Activated CD8-positive, alpha-beta T cell treated with anti-CD3 and anti-CD28 coated beads, Interleukin-2, amount 10 ng/mL, durations not matched to agents 7 days and 5 days (primary cell): ENCODE measurements at regions of chr4 and their contacts with region 1.

Region 1: GRCh38 chr4:1746265-1746691 is 25.0 kb downstream of the TACC3 start:
- DNase-seq: peak; percentile 88
- ATAC-seq: peak; percentile 78
- H3K4me3 Mint-ChIP-seq: no peak overlapping the region
- H3K27ac Mint-ChIP-seq: no peak overlapping the region
- H3K4me1 Mint-ChIP-seq: peaks cover 2% of the 10 kb centered on the region
- H3K27me3 Mint-ChIP-seq: no peaks in the 10 kb centered on the region

Region 2: DNA sequence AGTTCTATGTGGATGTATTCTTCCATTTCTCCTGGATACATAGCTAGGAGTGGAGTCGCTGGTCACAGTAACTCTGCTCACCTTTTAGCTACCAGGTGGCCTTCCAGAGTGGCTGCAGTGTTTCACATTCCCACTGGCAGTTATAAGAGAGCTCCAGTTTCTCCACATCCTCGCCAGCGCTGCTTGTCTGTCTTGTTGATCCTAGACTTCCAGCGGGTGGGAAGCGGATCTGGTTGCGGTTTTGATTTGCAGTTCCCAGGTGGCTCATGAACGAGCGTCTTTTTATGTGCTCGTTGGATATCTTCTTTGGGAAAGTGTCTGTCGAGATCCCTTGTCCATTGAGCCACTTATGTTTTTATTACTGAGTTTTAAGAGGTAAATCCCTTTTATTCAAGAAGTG is 13.4 kb before region 1 on chr4:
- CTCF ChIA-PET with region 1: interaction called, 10 read pairs
- POLR2A ChIA-PET with region 1: no interaction called
- DNase-seq: no peak
- ATAC-seq: no peak
- H3K4me3 Mint-ChIP-seq: no peak overlapping the region
- H3K27ac Mint-ChIP-seq: no peak overlapping the region
- H3K4me1 Mint-ChIP-seq: peaks cover 16% of the 10 kb centered on the region
- H3K27me3 Mint-ChIP-seq: no peaks in the 10 kb centered on the region

Region 3: DNA sequence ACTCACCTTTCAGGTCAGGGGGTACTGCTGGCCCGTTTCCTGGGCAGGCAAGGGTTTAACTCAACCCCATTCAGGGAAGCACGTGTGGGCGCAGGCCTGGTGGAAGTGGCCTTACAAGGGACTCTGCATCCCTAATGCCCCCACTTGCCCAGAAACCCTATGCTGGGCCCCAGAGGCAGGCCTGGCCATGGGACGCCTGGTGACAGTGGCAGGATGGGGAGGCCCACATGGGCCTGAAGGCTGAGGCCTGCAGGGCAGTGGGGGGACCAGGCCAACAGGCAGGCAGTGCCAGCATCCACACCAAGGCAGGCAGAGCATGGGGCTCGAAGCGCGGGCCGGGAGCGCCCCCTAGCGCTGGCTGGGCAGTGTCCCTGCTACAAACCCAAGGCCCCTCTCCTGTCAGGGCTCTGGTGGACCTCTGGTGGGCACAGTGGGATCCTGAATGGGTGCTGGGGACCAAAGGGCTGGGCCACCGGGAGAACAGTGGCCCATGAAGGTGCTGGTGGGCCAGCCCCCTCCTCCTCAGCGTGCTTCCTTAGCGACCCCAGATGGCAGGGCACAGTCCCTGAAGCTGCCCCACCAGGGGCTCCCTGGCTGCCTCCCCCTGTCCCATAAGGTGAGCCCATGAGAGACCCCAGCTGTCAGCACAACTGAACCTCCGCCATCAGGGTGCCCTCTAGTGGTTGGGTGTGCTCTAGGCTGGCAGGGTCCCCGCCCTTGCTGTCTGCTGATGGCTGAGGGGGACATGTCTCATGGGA is 63.7 kb after region 1 on chr4:
- CTCF ChIA-PET with region 1: interaction called, 107 read pairs
- POLR2A ChIA-PET with region 1: no interaction called
- DNase-seq: peak; percentile 75
- ATAC-seq: peak; percentile 88
- H3K4me3 Mint-ChIP-seq: no peak overlapping the region
- H3K27ac Mint-ChIP-seq: no peak overlapping the region
- H3K4me1 Mint-ChIP-seq: no peaks in the 10 kb centered on the region
- H3K27me3 Mint-ChIP-seq: no peaks in the 10 kb centered on the region